Keratinocyte (primary cell): ENCODE measurements at regions of chr15 and their contacts with region 1.

Region 1: GRCh38 chr15:66440501-66440900 is 53.8 kb downstream of the MAP2K1 start:
- DNase-seq: no peak
- H3K4me3 ChIP-seq: no peak overlapping the region
- H3K27ac ChIP-seq: no peak overlapping the region
- H3K4me1 ChIP-seq: no peaks in the 10 kb centered on the region
- H3K27me3 ChIP-seq: no peaks in the 10 kb centered on the region
- CTCF ChIP-seq: no peak

Region 2: DNA sequence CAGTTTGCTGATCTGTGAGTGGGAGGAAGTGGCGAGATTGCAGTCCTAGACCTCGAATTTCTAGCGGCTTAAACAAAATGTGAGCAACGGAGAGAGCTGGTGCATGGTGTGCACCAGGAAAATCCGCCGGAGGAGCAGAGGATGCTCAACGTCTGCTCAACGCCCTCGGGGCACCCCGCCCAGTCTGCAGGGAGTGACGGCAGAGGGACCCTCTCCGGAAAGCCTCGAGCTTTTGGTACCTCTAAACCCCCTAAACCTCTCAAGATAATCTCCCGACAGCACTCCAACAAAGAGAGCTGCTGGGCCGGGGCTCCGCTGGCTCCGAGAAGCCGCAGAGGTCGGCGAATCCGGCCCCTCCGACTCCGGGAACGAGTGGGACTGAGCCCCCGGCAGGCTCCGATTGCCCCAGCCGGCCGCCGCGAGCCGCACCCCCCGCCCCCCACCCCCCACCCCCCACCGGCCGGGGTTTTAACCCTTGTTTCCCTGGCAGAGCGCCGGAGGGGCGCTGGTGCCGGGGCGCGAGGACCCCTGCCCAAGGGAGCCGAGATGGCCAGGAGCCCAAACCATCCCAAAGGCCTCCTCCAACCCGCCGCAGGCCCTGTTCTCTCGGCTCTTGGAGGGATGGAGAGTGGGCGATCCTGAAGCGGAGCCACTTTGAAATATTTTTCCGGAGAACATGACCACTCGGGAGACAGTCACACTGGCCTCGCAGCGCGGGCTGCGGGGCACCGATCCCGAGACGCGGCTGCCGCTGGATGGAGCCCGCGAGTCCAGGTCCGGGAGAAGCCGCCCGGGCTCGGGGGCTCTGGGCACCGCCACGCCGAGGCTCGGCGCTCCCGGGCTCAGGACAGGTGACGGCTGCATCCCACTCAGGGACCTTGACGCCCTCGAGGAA is 188.5 kb before region 1 on chr15:
- dilution Hi-C with region 1: no loop called
- DNase-seq: no peak
- H3K4me3 ChIP-seq: peak overlapping the region; percentile 20 to 78 (median 68)
- H3K27ac ChIP-seq: no peak overlapping the region
- H3K4me1 ChIP-seq: peaks cover 7% of the 10 kb centered on the region
- H3K27me3 ChIP-seq: peaks cover 65% of the 10 kb centered on the region
- CTCF ChIP-seq: peak; percentile 56 to 79 (median 79)

Region 3: DNA sequence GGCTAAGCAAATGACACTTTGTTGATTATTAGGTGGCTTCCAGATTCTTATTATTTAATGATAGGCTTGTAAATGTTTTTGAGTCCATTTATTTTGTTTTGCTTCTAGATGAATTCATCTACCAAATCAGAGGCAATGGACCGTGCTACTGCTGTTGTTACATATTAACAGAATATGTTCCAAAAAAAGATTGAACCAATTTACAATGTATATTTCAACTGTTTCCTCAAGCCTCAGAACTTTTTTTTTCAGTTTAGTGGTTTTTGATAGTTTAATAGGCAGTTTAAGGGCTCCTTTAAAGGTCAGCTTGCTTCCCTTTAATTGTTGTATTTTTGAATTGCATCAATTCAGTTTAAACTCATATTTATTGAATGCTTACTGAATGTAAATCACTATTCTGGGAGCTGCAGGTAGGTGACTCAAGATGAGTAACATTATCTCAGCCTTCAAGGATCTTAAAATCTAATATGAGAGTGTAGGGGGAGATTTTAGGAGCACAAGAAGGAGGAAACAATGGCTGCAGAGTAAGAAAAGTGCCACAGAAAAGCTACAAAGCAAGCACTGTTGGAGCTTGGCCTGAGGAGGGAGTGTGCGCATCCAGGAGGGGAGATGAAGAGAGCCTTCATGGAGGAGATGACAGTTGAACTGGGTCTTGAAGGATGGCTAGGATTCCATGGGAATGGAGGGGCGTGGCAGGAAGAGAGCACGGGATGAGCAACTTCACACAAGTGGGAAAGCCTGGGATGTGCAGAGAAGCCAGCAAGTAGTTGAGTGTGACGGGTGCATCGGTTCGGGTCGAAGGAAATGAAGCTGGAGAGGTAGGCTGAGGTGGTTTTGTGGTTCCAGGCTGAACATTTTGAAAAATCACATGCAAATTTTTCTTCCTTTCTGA is 39.1 kb before region 1 on chr15:
- dilution Hi-C with region 1: loop called (anchors 5 kb)
- DNase-seq: no peak
- H3K4me3 ChIP-seq: no peak overlapping the region
- H3K27ac ChIP-seq: peak overlapping the region; percentile 44
- H3K4me1 ChIP-seq: peaks cover 28% of the 10 kb centered on the region
- H3K27me3 ChIP-seq: no peaks in the 10 kb centered on the region
- CTCF ChIP-seq: no peak